Activated CD4-positive, alpha-beta T cell treated with anti-CD3 and anti-CD28 coated beads, Interleukin-2, amount 10 ng/mL, durations not matched to agents 24 days and 14 days (primary cell): ENCODE measurements at regions of chr13 and their contacts with region 1.

Region 1: GRCh38 chr13:21913010-21913409 is 242.1 kb downstream of the FGF9 start:
- DNase-seq: peak; percentile 59
- H3K4me3 Mint-ChIP-seq: no peak overlapping the region
- H3K27ac Mint-ChIP-seq: no peak overlapping the region
- H3K4me1 Mint-ChIP-seq: no peaks in the 10 kb centered on the region
- H3K27me3 Mint-ChIP-seq: no peaks in the 10 kb centered on the region

Region 2: DNA sequence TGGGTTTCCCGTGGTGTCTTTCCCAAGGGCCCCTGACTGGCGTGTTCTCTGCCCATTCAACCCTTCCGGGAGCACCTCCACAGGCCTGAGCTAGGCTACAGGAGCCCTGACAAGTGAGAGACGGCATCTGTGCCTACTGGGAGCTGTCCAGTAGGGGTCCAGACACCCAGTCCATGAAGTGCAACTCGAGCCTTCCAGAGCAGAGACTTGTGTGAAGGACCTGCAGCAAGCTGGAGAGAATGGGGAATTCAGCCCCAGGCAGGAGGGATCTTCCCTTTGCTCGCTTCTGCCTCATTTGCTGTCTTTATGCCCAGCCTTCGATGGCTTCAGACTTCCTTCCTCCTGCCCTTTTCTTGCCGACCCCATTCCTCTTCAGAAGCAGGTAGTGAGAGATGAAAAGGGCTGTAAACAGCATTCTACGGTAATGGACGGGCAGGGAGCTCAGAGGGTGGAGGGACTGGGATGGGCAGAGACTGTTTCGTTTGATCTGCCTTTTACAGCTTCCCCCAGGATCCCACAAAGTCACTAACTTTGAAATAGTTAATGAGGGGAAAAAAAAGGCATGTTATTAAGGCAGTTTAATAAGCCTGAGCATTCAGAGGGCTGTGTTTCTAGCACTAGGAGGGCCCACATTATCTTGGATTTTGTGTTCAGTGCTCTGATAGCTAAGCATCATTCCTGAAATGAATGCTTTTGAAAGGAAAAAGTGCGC is 85.4 kb after region 1 on chr13:
- intact Hi-C with region 1: no loop called
- DNase-seq: peak; percentile 41
- H3K4me3 Mint-ChIP-seq: no peak overlapping the region
- H3K27ac Mint-ChIP-seq: no peak overlapping the region
- H3K4me1 Mint-ChIP-seq: no peaks in the 10 kb centered on the region
- H3K27me3 Mint-ChIP-seq: peaks cover 8% of the 10 kb centered on the region

Region 3: GRCh38 chr13:22278336-22278929 is 365.4 kb after region 1 on chr13:
- intact Hi-C with region 1: loop called (anchors 1 kb)
- DNase-seq: peak; percentile 87
- H3K4me3 Mint-ChIP-seq: no peak overlapping the region
- H3K27ac Mint-ChIP-seq: no peak overlapping the region
- H3K4me1 Mint-ChIP-seq: no peaks in the 10 kb centered on the region
- H3K27me3 Mint-ChIP-seq: no peaks in the 10 kb centered on the region